ENCODE measurements at regions of chr3 and their contacts with region 1.

Region 1: DNA sequence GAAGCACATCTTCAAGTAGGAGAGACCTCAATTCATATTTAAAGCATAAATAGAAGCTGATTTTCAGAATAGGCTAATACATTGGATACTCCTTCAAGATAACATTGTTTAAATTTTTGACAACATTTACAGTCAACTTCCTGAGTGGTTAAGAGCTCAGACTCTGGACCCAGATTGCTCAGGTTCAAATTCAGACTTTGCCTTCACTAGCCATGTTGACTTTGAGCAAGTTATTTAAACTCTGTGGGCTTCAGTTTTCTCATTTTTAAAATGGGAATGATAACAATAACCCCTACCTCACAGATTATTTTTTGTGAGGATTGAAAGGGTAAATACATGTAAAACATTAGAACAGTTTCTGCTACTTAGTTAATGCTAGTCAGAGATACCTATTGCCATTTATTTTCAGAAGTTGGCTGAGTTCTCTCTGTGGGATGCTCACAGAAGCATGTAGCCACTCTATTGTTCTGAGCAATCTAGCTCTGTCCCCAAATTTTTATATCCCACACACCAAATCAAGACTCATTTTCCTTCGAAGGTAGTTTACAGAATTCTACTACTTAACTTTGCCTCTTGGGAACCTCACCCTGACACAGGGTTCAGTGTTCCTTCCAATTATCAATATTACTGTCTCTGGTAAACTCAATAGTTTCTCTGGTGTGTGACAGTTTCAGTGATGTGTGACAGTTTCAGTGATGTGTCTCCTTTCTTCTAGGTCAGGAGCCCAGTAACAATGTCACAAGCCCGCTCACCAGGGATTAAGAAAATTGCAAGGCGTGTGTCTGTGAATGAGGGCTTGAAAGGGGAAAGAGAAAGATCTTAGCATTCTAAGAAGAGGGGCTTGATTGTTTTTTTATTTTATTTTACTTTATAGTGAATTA is 79.4 kb upstream of the OSTN start:
- DNase-seq: no peak
- H3K4me3 ChIP-seq: no peak overlapping the region
- H3K27ac ChIP-seq: no peak overlapping the region
- H3K4me1 ChIP-seq: no peaks in the 10 kb centered on the region
- H3K27me3 ChIP-seq: no peaks in the 10 kb centered on the region
- CTCF ChIP-seq: no peak

Region 2: GRCh38 chr3:190941694-190942260 is 177.9 kb before region 1 on chr3:
- CTCF ChIA-PET with region 1: no interaction called
- dilution Hi-C with region 1: no loop called
- in situ Hi-C with region 1: no loop called
- intact Hi-C with region 1: no loop called
- DNase-seq: no peak
- H3K4me3 ChIP-seq: no peak overlapping the region
- H3K27ac ChIP-seq: no peak overlapping the region
- H3K4me1 ChIP-seq: no peaks in the 10 kb centered on the region
- H3K27me3 ChIP-seq: peaks cover 3% of the 10 kb centered on the region
- CTCF ChIP-seq: no peak

Region 3: DNA sequence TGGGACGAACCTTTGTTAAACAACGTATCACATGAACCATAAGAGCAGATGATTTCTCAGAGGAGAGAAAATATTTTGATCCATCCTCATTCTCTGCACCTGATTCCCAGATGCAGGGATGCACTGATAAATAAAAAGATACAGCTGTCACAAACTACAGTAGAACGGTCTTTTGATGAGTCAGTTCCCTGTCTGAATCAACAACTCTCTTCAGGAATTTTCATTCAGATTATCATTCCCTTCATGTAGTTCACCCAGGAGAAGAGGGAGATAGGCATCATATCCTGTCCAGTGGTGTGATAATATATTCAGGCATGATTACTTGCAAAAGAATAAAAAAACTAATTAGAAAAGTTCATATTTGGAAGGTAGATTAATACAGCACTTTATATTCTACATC is 862.8 kb after region 1 on chr3:
- CTCF ChIA-PET with region 1: no interaction called
- dilution Hi-C with region 1: no loop called
- in situ Hi-C with region 1: no loop called
- intact Hi-C with region 1: loop called (anchors 5 kb)
- DNase-seq: no peak
- H3K4me3 ChIP-seq: no peak overlapping the region
- H3K27ac ChIP-seq: no peak overlapping the region
- H3K4me1 ChIP-seq: no peaks in the 10 kb centered on the region
- H3K27me3 ChIP-seq: no peaks in the 10 kb centered on the region
- CTCF ChIP-seq: no peak

Measured in mammary epithelial cell (primary cell).